ENCODE measurements at regions of chr2 and their contacts with region 1.

Region 1: GRCh38 chr2:224650815-224651439 is 65.2 kb downstream of the CCDC195 start:
- DNase-seq: peak; percentile 38
- ATAC-seq: peak; percentile 91
- H3K4me3 ChIP-seq: no peak overlapping the region
- H3K27ac ChIP-seq: peak overlapping the region; percentile 58
- H3K4me1 ChIP-seq: peaks cover 3% of the 10 kb centered on the region
- H3K27me3 ChIP-seq: no peaks in the 10 kb centered on the region
- CTCF ChIP-seq: peak; percentile 78

Region 2: DNA sequence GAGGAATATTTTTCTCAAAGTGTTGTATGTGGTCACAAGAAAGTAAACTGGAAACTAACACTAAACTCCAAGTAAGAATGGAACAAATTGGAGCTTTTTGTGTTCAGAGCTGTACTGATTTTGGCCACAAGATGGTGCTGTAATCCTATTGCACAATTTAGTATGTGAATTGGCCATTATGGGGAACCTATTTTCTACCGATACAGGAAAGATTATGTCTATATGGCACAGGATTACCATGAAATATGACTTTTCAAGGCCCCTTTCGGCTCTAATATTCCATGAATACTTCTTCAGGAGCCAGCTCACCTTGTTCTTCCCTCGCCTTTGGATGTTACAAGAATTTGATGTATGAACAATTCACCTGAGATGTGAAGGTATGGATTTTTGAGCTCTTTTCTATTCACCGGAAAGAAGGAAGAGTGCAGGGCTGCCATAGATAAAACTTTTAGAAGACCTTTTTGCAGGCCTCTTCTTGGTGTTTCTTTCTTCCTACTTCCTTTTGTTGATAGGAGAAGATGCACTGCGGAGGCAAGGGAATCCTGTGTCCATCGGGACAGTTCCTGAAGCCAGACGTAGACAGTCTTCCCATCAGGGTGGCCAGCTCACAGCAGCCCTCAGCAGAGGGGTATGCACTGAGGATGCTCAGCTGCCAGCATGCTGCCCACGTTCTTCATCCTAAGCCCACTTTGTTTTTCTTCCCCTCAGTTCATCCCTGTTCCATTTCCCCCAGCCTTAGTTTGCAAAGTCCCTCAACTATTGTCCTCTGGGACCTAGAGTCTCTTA is 680.4 kb before region 1 on chr2:
- CTCF ChIA-PET with region 1: no interaction called
- POLR2A ChIA-PET with region 1: no interaction called
- in situ Hi-C with region 1: no loop called
- intact Hi-C with region 1: loop called (anchors 10 kb)
- DNase-seq: peak; percentile 45
- ATAC-seq: peak; percentile 75
- H3K4me3 ChIP-seq: no peak overlapping the region
- H3K27ac ChIP-seq: no peak overlapping the region
- H3K4me1 ChIP-seq: no peaks in the 10 kb centered on the region
- H3K27me3 ChIP-seq: no peaks in the 10 kb centered on the region
- CTCF ChIP-seq: peak; percentile 84; the same call in 1 of the 2 replicates

Region 3: GRCh38 chr2:224357098-224357901 is 293.6 kb before region 1 on chr2:
- CTCF ChIA-PET with region 1: interaction called, 5 read pairs
- POLR2A ChIA-PET with region 1: no interaction called
- in situ Hi-C with region 1: no loop called
- intact Hi-C with region 1: loop called (anchors 2 kb)
- DNase-seq: peak; percentile 69
- ATAC-seq: peak; percentile 86
- H3K4me3 ChIP-seq: no peak overlapping the region
- H3K27ac ChIP-seq: no peak overlapping the region
- H3K4me1 ChIP-seq: 0 out of 2 replicates have a peak, but pooled peaks cover 2% of the 10 kb centered on the region
- H3K27me3 ChIP-seq: no peaks in the 10 kb centered on the region
- CTCF ChIP-seq: peak; percentile 78

Region 4: GRCh38 chr2:224369028-224369632 is 281.8 kb before region 1 on chr2:
- CTCF ChIA-PET with region 1: no interaction called
- POLR2A ChIA-PET with region 1: no interaction called
- in situ Hi-C with region 1: no loop called
- intact Hi-C with region 1: no loop called
- DNase-seq: no peak
- ATAC-seq: no peak
- H3K4me3 ChIP-seq: no peak overlapping the region
- H3K27ac ChIP-seq: no peak overlapping the region
- H3K4me1 ChIP-seq: no peaks in the 10 kb centered on the region
- H3K27me3 ChIP-seq: no peaks in the 10 kb centered on the region
- CTCF ChIP-seq: peak; percentile 76

Region 5: DNA sequence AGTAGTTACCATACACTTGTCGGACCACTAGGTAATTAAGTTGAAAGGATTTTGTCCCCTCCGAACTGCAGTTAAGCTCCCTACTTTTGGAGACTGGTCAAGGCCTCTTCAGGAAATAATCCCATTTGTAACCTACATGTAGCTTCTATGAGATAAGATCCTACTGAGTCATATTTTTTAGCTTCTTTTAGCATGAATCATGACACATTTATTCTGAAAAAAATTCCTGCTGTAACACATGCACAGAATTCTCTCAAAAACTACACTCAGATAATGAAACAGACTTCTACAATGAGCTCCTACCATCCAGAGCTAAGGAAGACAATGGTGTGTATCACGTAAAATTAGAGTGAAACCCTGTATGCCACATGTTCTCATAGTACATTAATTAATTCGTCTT is 165.9 kb after region 1 on chr2:
- CTCF ChIA-PET with region 1: no interaction called
- POLR2A ChIA-PET with region 1: interaction called, 14 read pairs
- in situ Hi-C with region 1: no loop called
- intact Hi-C with region 1: no loop called
- DNase-seq: peak; percentile 65
- ATAC-seq: peak; percentile 82
- H3K4me3 ChIP-seq: no peak overlapping the region
- H3K27ac ChIP-seq: peak overlapping the region; percentile 45; the same call in 1 of the 2 replicates
- H3K4me1 ChIP-seq: peaks cover 16% of the 10 kb centered on the region
- H3K27me3 ChIP-seq: no peaks in the 10 kb centered on the region
- CTCF ChIP-seq: no peak